Right ventricle myocardium superior (tissue), 1 donor: ENCODE measurements at regions of chr19 and their contacts with region 1.

Region 1: GRCh38 chr19:10644260-10645007 is 9.7 kb upstream of the ILF3 start:
- DNase-seq: peak; percentile 90
- ATAC-seq: peak; percentile 93

Region 2: GRCh38 chr19:10580979-10581631 is 63.3 kb before region 1 on chr19:
- intact Hi-C with region 1: loop called (anchors 2 kb)
- DNase-seq: peak; percentile 93
- ATAC-seq: peak; percentile 96

Region 3: DNA sequence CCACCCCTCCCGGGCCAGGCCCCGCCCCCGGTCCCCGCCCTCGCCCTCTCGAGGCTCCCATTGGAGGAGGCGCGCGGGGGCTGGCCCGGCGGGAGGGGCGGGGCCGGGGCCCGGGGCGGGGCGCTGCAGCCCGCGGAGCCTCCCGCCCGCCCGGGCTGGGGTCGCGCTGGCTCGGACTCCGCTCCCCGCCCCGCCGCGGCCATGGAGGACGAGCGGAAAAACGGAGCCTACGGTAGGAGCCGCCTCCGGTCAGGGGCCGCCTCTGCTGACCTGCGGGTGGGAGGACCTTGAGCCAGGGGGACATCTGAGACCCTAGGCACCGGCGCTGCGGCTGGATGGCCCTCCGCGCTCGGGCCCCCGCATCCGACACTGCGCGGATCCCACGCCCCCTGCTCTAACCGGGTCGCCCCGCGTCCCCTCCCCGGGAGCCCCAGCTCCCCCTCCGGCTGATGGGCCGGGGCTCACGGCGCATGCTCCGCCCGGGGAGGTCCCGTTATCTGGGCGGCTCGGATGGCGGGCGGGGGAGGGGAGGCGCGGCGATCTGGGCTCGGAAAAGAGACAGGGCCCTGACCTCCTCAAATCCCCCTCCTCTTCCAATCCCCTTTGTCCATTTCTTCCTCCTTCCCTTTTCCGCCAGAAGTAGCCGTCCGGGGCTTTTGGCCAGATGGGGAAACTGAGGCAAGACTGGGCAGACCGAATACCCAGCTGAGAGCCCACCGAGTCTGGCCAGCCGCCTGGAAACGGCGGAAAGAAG is 41.9 kb before region 1 on chr19:
- intact Hi-C with region 1: no loop called
- DNase-seq: peak; percentile 92
- ATAC-seq: peak; percentile 99